ENCODE measurements at regions of chr3 and their contacts with region 1.

Region 1: GRCh38 chr3:33787328-33788009 is 11.0 kb upstream of the PDCD6IP start:
- DNase-seq: peak; percentile 74
- H3K4me3 Mint-ChIP-seq: peak overlapping the region; percentile 48
- H3K27ac Mint-ChIP-seq: no peak overlapping the region
- H3K4me1 Mint-ChIP-seq: peaks cover 9% of the 10 kb centered on the region
- H3K27me3 Mint-ChIP-seq: no peaks in the 10 kb centered on the region

Region 2: DNA sequence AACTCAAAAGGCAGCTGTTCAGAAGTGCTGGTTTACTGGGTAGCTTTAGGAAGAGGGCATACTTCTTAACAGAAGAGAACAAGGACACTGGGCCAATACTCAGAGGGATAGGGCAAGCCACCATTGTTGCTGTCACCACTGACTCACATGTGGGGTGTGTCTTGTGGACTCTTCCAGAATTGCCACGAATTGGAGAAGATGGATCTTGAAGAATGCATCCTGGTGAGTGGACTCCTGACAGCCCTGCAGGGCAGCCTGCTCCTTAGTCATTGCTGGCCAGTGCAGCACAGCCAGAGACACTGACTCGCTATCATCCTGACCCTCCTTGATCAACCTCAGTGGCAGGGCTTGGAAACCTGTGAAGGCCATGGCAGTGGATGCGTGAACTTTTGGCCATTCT is 409.5 kb before region 1 on chr3:
- CTCF ChIA-PET with region 1: interaction called, 5 read pairs
- intact Hi-C with region 1: loop called (anchors 5 kb)
- DNase-seq: no peak
- H3K4me3 Mint-ChIP-seq: no peak overlapping the region
- H3K27ac Mint-ChIP-seq: no peak overlapping the region
- H3K4me1 Mint-ChIP-seq: peaks cover 3% of the 10 kb centered on the region
- H3K27me3 Mint-ChIP-seq: no peaks in the 10 kb centered on the region

Region 3: GRCh38 chr3:33636125-33636850 is 151.2 kb before region 1 on chr3:
- CTCF ChIA-PET with region 1: interaction called, 17 read pairs
- intact Hi-C with region 1: loop called (anchors 1 kb)
- DNase-seq: no peak
- H3K4me3 Mint-ChIP-seq: no peak overlapping the region
- H3K27ac Mint-ChIP-seq: no peak overlapping the region
- H3K4me1 Mint-ChIP-seq: no peaks in the 10 kb centered on the region
- H3K27me3 Mint-ChIP-seq: no peaks in the 10 kb centered on the region

Region 4: GRCh38 chr3:33773637-33774036 is 13.8 kb before region 1 on chr3:
- CTCF ChIA-PET with region 1: interaction called, 18 read pairs
- intact Hi-C with region 1: no loop called
- DNase-seq: no peak
- H3K4me3 Mint-ChIP-seq: no peak overlapping the region
- H3K27ac Mint-ChIP-seq: no peak overlapping the region
- H3K4me1 Mint-ChIP-seq: no peaks in the 10 kb centered on the region
- H3K27me3 Mint-ChIP-seq: no peaks in the 10 kb centered on the region

Region 5: DNA sequence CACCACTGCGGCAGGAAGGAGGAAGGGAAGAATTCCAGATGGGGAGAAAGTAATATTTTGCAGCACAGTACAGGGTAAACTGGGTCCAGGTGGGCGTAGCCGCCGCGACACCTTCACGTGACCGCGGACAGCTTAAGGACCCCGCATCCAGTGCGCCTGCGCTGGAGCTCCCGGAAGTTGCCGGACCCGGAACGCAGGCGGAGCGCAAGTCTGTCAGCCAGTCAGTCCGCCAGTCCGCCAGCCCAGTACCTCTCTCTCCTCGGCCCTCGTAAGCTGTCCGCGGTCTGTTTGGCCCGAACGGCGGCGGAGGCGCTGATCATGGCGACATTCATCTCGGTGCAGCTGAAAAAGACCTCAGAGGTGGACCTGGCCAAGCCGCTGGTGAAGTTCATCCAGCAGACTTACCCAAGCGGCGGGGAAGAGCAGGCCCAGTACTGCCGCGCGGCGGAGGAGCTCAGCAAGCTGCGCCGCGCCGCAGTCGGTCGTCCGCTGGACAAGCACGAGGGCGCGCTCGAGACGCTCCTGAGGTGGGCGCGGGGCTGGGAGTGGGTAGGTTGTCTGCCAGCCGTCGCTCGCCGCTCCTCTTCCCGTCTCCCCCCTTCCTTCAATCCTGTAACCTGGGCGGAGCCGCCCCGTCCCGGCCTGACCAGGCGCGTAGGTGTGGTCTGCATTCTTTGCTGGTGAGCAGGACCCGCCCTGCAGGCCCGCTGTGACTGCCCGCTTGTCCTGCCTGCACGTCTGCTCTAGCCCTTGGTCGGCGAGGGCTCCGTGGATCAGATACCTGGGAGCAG is 11.1 kb after region 1 on chr3 and contains the start of gene PDCD6IP:
- CTCF ChIA-PET with region 1: interaction called, 12 read pairs
- intact Hi-C with region 1: no loop called
- DNase-seq: peak; percentile 88
- H3K4me3 Mint-ChIP-seq: peak within 1 kb of the TSS; percentile 95
- H3K27ac Mint-ChIP-seq: peak within 1 kb of the TSS; percentile 83
- H3K4me1 Mint-ChIP-seq: peaks cover 56% of the 10 kb centered on the region
- H3K27me3 Mint-ChIP-seq: no peaks in the 10 kb centered on the region
- total RNA-seq, gene PDCD6IP: 126 to 127 TPM

Measured in activated naive CD4-positive, alpha-beta T cell treated with anti-CD3 and anti-CD28 coated beads for 36 hours (primary cell).